Activated B cell treated with CpG ODN at 0.5 μM for 24 hours (primary cell): ENCODE measurements at regions of chr19 and their contacts with region 1.

Region 1: DNA sequence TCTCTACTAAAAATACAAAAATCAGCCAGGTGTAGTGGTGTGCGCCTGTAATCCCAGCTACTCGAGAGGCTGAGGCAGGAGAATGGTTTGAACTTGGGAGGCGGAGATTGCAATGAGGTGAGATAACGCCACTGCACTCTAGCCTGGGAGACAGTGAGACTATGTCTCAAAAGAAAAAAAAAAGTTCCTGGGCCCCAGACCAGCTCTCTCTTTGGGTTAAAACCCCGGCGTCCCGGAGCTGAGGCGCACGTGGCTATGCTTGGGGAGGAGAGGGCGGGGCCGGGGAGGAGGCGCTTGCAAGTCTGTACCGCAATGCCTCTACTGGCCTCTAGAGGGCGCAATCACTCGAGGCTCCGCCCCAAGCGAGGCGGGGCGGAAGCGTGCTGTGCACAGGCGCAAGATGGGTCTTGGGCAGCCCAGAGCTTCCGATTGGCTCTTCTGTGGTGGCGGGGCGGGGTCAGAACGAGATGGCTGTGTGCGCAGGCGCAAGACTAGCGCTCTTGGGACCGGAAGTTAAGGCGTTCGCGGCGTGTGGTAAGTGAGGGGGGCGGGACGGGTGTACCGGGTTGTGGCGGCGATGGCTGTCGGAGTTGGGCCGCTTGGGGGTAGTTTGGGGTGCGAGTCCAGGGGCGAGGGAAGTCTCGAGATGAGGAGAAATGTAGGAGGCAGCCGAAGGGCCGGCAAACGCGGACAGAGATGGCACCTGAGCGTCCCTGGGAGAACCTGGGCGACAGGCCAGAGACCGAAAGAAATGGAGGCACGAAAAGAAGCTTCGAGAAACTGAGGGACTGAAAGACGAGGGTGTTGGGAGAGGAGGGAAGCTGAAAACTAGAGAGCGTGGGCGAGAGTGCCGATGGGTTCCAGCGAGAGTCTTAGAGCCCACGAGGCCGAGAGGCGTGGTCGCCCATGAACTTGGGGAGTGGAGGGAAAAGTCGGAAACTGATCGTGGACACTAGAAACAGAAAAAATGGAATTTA is at the start of gene DHX34:
- DNase-seq: peak; percentile 99
- ATAC-seq: peak; percentile 98
- H3K4me3 Mint-ChIP-seq: peak within 1 kb of the TSS; percentile 98
- H3K27ac Mint-ChIP-seq: peak within 1 kb of the TSS; percentile 90
- H3K4me1 Mint-ChIP-seq: peaks cover 40% of the 10 kb centered on the region
- H3K27me3 Mint-ChIP-seq: no peaks in the 10 kb centered on the region
- CTCF ChIP-seq: peak; percentile 65
- total RNA-seq, gene DHX34: 17.4 and 20.0 TPM in 2 replicates

Region 2: DNA sequence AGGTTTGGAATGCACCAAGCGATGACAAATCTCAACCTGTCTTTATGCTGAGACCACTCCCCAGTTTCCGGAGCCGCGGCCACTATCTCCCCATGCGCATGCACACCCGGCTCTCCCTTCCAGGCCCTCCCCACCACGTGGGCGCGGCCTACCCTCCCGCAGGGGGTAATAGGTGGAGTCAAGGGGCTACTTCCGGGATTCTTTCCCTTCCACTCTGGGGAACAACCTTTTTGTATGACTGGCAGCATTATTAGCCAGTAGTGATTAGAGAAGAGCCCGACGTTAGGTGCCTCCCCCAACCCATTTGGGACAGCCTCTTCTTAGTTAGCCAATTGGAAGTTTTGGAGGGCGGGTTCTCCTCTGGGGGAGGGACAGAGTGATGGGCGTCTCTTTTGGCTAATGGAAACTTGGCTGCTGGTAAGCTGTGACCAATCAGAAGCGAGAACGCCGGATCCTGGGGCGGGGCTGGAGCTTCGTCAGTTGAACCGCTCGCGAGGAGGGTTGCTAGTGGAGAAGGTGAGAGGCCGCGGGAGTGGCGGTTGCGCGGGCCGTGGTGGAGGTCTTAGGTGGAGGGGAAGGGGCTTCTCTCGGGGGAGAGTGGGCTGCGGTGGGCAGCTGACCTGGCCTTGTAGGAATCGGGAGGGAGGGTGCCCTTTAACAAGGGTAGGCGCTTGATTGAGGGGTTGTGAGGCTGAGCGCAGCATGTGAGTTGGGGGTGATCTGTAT is 1354.0 kb before region 1 on chr19 and contains the start of gene CCDC61:
- CTCF ChIA-PET with region 1: no interaction called
- POLR2A ChIA-PET with region 1: no interaction called
- intact Hi-C with region 1: loop called (anchors 2 kb)
- DNase-seq: peak; percentile 85
- ATAC-seq: peak; percentile 94
- H3K4me3 Mint-ChIP-seq: no peak within 1 kb of the TSS
- H3K27ac Mint-ChIP-seq: no peak within 1 kb of the TSS
- H3K4me1 Mint-ChIP-seq: peaks cover 23% of the 10 kb centered on the region
- H3K27me3 Mint-ChIP-seq: peaks cover 21% of the 10 kb centered on the region
- CTCF ChIP-seq: no peak
- total RNA-seq, gene CCDC61: 24.9 and 26.9 TPM in 2 replicates

Region 3: GRCh38 chr19:47273313-47273977 is 75.7 kb before region 1 on chr19:
- CTCF ChIA-PET with region 1: interaction called, 12 read pairs
- POLR2A ChIA-PET with region 1: interaction called, 9 read pairs
- intact Hi-C with region 1: no loop called
- DNase-seq: peak; percentile 83
- ATAC-seq: peak; percentile 54
- H3K4me3 Mint-ChIP-seq: peak overlapping the region; percentile 96
- H3K27ac Mint-ChIP-seq: peak overlapping the region; percentile 97
- H3K4me1 Mint-ChIP-seq: peaks cover 27% of the 10 kb centered on the region
- H3K27me3 Mint-ChIP-seq: no peaks in the 10 kb centered on the region
- CTCF ChIP-seq: no peak

Region 4: DNA sequence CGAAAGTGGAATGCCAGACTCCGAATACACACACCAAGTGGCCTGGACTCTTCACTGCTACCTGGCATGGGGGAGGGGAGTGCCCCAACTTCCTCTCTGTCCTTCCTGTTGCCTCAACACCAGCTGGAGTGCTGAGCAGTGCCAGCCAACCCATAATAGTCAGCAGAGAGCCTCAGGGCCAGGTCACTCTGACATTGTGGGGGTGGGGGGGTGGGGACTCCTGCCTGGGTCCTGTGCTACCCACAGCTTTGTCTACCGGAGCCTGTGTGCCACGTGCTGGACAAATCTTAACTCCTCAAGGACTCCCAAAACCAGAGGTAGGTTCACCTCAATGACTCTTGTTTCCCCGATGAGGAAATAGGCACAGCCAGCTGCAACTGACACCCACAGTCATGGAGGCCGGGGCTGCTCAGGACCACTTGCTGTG is 12.2 kb before region 1 on chr19:
- CTCF ChIA-PET with region 1: interaction called, 10 read pairs
- POLR2A ChIA-PET with region 1: no interaction called
- intact Hi-C with region 1: no loop called
- DNase-seq: no peak
- ATAC-seq: peak; percentile 54
- H3K4me3 Mint-ChIP-seq: no peak overlapping the region
- H3K27ac Mint-ChIP-seq: no peak overlapping the region
- H3K4me1 Mint-ChIP-seq: peaks cover 7% of the 10 kb centered on the region
- H3K27me3 Mint-ChIP-seq: peaks cover 5% of the 10 kb centered on the region
- CTCF ChIP-seq: no peak

Region 5: DNA sequence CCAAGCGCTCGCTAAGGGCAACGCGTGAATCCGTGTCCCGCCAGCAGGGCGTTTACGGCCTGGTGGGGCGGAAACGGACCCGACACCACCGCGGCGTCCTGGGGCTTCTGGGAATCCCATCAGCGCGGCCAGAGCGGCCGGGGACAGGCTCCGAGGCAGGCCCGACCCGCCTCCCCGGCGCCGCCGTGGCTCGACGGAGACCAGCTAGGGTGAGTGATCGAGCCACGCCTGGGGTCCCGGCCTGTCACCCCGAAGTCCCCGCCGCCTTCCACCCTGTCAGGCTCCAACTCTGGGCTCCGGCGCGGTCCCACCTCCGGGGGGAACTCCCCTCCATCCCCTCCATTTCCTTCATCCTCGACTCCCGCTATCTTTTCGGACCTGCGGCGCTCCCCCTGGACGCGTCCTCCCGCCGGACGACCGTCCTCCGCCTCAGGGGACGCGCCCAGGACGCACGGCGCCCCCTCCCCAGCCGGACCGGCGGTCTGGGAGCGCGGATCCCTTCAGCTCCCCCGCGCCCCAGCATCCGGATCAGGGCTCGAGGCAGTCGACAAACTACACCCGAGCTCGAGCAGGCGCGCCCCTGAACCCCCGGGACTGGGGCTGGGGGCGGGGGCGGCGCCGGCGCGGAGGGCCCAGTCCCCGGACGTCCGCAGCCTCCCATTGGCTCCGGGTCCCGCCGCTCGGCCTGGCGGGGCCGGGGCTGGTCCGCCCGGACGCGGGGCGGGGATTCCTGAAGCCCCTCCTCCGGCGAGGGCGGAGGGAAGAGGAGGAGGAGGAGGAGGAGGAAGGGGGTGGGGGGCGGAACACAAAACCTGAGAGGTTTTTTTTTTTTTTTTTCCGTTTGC is 259.2 kb after region 1 on chr19:
- CTCF ChIA-PET with region 1: no interaction called
- POLR2A ChIA-PET with region 1: no interaction called
- intact Hi-C with region 1: loop called (anchors 2 kb)
- DNase-seq: peak; percentile 99
- ATAC-seq: peak; percentile 90
- H3K4me3 Mint-ChIP-seq: peak overlapping the region; percentile 84
- H3K27ac Mint-ChIP-seq: peak overlapping the region; percentile 71
- H3K4me1 Mint-ChIP-seq: peaks cover 25% of the 10 kb centered on the region
- H3K27me3 Mint-ChIP-seq: no peaks in the 10 kb centered on the region
- CTCF ChIP-seq: no peak